CD4-positive, alpha-beta T cell (primary cell): ENCODE measurements at regions of chr19 and their contacts with region 1.

Region 1: GRCh38 chr19:42401365-42402303 is 11.5 kb upstream of the CNFN start:
- DNase-seq: peak; percentile 63 to 90 (median 70)
- ATAC-seq: peak; percentile 68
- H3K4me3 ChIP-seq: peak overlapping the region; percentile 56
- H3K4me3 Mint-ChIP-seq: peak overlapping the region; percentile 90
- H3K27ac ChIP-seq: peak overlapping the region in 1 of 2 donors; percentile 40
- H3K27ac Mint-ChIP-seq: peak overlapping the region; percentile 75
- H3K4me1 ChIP-seq: peaks cover 37% of the 10 kb centered on the region
- H3K4me1 Mint-ChIP-seq: peaks cover 46% of the 10 kb centered on the region
- H3K27me3 ChIP-seq: no peaks in the 10 kb centered on the region
- H3K27me3 Mint-ChIP-seq: no peaks in the 10 kb centered on the region
- CTCF ChIP-seq: peak; percentile 77

Region 2: GRCh38 chr19:42113641-42114348 is 287.8 kb before region 1 on chr19:
- CTCF ChIA-PET with region 1: interaction called, 3 read pairs
- POLR2A ChIA-PET with region 1: no interaction called
- intact Hi-C with region 1: loop called (anchors 1 to 10 kb)
- DNase-seq: no peak
- ATAC-seq: no peak
- H3K4me3 ChIP-seq: no peak overlapping the region
- H3K4me3 Mint-ChIP-seq: no peak overlapping the region
- H3K27ac ChIP-seq: no peak overlapping the region
- H3K27ac Mint-ChIP-seq: peak overlapping the region; percentile 63
- H3K4me1 ChIP-seq: peaks cover 3% of the 10 kb centered on the region
- H3K4me1 Mint-ChIP-seq: peaks cover 5% of the 10 kb centered on the region
- H3K27me3 ChIP-seq: no peaks in the 10 kb centered on the region
- H3K27me3 Mint-ChIP-seq: no peaks in the 10 kb centered on the region
- CTCF ChIP-seq: no peak

Region 3: GRCh38 chr19:42375415-42376176 is 26.0 kb before region 1 on chr19:
- CTCF ChIA-PET with region 1: no interaction called
- POLR2A ChIA-PET with region 1: no interaction called
- intact Hi-C with region 1: no loop called
- DNase-seq: no peak
- ATAC-seq: no peak
- H3K4me3 ChIP-seq: no peak overlapping the region
- H3K4me3 Mint-ChIP-seq: no peak overlapping the region
- H3K27ac ChIP-seq: no peak overlapping the region
- H3K27ac Mint-ChIP-seq: no peak overlapping the region
- H3K4me1 ChIP-seq: no peaks in the 10 kb centered on the region
- H3K4me1 Mint-ChIP-seq: no peaks in the 10 kb centered on the region
- H3K27me3 ChIP-seq: peaks cover 3 to 6% of the 10 kb centered on the region in 2 experiments
- H3K27me3 Mint-ChIP-seq: peaks cover 3% of the 10 kb centered on the region
- CTCF ChIP-seq: no peak

Region 4: DNA sequence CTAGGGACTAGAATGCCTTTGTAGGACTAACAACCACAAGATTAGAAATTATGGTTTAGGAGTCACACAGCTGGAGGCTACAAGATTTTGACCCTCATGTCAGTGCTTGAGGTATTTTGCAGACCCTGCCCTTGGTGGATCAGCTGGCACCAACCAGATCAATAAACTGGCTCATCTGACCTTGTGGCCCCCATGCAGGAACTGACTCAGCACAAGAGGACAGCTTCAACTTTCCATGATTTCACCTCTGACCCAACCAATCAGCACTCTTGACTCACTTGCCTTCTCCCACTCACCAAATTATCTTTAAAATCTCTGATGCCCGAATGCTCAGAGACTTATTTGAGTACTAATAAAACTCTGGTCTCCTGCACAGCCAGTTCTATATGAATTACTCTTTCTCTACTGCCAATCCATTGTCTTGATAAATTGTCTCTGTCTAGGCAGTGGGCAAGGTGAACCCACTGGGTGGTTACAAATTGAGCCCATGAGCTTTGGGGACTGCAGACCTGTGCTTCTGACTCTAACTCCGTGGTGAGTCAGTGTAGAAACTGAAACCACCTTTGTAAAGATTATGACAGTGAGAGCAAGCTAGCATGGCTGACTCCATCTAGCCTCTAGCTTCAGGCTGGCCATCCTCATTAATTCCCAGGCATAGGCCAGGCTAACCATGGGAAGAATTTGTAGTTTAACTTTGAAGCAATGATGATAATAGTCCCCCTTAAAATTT is 226.9 kb after region 1 on chr19:
- CTCF ChIA-PET with region 1: no interaction called
- POLR2A ChIA-PET with region 1: no interaction called
- intact Hi-C with region 1: no loop called
- DNase-seq: no peak
- ATAC-seq: no peak
- H3K4me3 ChIP-seq: no peak overlapping the region
- H3K4me3 Mint-ChIP-seq: no peak overlapping the region
- H3K27ac ChIP-seq: no peak overlapping the region
- H3K27ac Mint-ChIP-seq: no peak overlapping the region
- H3K4me1 ChIP-seq: no peaks in the 10 kb centered on the region
- H3K4me1 Mint-ChIP-seq: no peaks in the 10 kb centered on the region
- H3K27me3 ChIP-seq: peaks cover 0 to 13% of the 10 kb centered on the region in 2 experiments
- H3K27me3 Mint-ChIP-seq: peaks cover 33% of the 10 kb centered on the region
- CTCF ChIP-seq: no peak